ENCODE measurements at regions of chr14 and their contacts with region 1.

Region 1: DNA sequence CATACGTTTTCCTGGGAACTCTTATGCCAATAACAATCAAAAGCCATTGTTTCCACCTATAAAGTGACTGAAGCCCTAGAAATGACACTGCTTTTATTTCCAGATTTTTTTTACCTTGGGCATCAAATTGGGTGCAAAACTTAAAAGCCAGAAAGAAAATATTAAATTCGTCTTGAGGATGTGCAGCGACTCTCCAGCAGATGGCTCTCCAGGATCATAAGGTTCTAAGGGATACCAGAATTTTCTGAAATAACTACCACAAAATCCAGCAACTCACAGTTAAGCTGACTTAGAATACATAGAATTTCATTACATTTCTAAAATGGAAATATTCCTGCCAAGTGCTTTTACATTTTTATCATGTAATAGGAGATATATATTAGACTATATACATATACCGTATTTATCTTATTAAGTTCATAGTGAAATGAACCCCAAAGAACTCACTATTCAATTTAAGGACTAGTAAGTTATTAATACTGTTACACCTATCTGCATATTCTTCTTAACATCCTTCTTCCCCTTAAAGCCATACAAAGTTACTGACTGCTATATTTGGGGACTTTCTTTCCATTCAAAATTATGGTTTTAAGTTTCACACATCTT is 44.0 kb downstream of the ARMH4 start:
- DNase-seq: peak; percentile 72
- H3K4me3 ChIP-seq: no peak overlapping the region
- H3K27ac ChIP-seq: no peak overlapping the region
- H3K4me1 ChIP-seq: no peaks in the 10 kb centered on the region
- H3K27me3 ChIP-seq: no peaks in the 10 kb centered on the region
- CTCF ChIP-seq: peak; percentile 82

Region 2: GRCh38 chr14:58171090-58171489 is 63.0 kb after region 1 on chr14:
- CTCF ChIA-PET with region 1: no interaction called
- POLR2A ChIA-PET with region 1: no interaction called
- intact Hi-C with region 1: loop called (anchors 2 kb)
- DNase-seq: peak; percentile 88
- H3K4me3 ChIP-seq: no peak overlapping the region
- H3K27ac ChIP-seq: no peak overlapping the region
- H3K4me1 ChIP-seq: peaks cover 12% of the 10 kb centered on the region
- H3K27me3 ChIP-seq: no peaks in the 10 kb centered on the region
- CTCF ChIP-seq: no peak

Region 3: GRCh38 chr14:58258156-58258555 is 150.1 kb after region 1 on chr14:
- CTCF ChIA-PET with region 1: no interaction called
- POLR2A ChIA-PET with region 1: no interaction called
- intact Hi-C with region 1: loop called (anchors 10 kb)
- DNase-seq: no peak
- H3K4me3 ChIP-seq: no peak overlapping the region
- H3K27ac ChIP-seq: no peak overlapping the region
- H3K4me1 ChIP-seq: no peaks in the 10 kb centered on the region
- H3K27me3 ChIP-seq: no peaks in the 10 kb centered on the region
- CTCF ChIP-seq: no peak

Region 4: DNA sequence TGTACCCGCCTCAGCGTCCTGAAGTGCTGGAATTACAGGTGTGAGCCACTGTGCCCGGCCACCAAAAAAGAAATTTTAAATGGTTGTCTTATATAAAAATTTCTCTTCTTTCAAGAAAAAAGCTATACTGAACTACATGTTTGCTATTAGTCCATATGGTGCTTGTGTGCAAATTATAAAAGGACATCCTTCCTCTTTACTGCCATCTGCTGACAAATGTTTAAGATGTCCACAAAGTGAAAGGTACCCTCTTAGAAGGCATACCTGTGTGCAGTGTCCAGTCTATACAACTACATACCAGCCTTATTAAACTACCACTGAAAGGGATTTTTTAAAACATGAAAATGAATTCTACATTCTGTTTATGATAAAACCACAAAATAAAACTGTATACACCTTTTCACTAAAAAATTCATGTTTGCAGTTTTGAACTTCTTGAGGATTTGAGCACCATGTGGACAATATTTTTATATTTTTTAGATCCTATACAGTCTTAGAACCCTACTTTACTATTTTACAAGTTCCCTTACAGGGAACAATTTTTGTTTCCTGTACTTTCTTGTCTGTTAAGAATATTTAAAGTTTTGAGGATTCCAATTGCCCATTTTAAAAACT is 254.9 kb after region 1 on chr14:
- CTCF ChIA-PET with region 1: no interaction called
- POLR2A ChIA-PET with region 1: no interaction called
- intact Hi-C with region 1: loop called (anchors 5 kb)
- DNase-seq: peak; percentile 49
- H3K4me3 ChIP-seq: no peak overlapping the region
- H3K27ac ChIP-seq: no peak overlapping the region
- H3K4me1 ChIP-seq: no peaks in the 10 kb centered on the region
- H3K27me3 ChIP-seq: no peaks in the 10 kb centered on the region
- CTCF ChIP-seq: peak; percentile 62

Region 5: GRCh38 chr14:58395812-58396788 is 288.1 kb after region 1 on chr14 and contains the start of gene TOMM20L:
- CTCF ChIA-PET with region 1: no interaction called
- POLR2A ChIA-PET with region 1: no interaction called
- intact Hi-C with region 1: loop called (anchors 5 kb)
- DNase-seq: peak; percentile 83
- H3K4me3 ChIP-seq: peak within 1 kb of the TSS; percentile 48
- H3K27ac ChIP-seq: no peak within 1 kb of the TSS
- H3K4me1 ChIP-seq: no peaks in the 10 kb centered on the region
- H3K27me3 ChIP-seq: no peaks in the 10 kb centered on the region
- CTCF ChIP-seq: peak; percentile 64; the same call in 1 of the 2 replicates
- total RNA-seq, gene TOMM20L: not detected in 2 replicates